PC-3 (cell line): ENCODE measurements at regions of chr6 and their contacts with region 1.

Region 1: DNA sequence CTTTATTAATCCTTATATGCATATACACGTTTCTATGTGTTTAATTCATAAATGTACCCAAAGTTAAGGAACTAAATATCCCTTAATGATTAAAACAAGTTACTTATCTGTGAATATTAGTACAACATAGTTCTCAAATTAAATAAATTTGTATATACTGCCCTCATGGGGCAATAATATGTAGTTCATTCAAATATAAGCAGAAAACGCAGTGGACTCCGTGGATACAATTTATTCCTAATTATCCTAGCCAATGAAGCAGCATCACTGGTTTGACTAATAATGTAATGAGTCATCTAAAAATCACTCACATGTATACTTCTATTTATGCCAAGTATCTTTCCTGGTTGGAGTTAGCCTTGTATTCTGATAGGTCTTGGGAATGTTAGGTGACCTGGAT is 111.6 kb downstream of the TBC1D32 start:
- DNase-seq: peak; percentile 70
- ATAC-seq: peak; percentile 73
- H3K4me3 ChIP-seq: no peak overlapping the region
- H3K27ac ChIP-seq: no peak overlapping the region
- H3K4me1 ChIP-seq: 0 out of 2 replicates have a peak, but pooled peaks cover 4% of the 10 kb centered on the region
- H3K27me3 ChIP-seq: no peaks in the 10 kb centered on the region
- CTCF ChIP-seq: peak; percentile 52

Region 2: DNA sequence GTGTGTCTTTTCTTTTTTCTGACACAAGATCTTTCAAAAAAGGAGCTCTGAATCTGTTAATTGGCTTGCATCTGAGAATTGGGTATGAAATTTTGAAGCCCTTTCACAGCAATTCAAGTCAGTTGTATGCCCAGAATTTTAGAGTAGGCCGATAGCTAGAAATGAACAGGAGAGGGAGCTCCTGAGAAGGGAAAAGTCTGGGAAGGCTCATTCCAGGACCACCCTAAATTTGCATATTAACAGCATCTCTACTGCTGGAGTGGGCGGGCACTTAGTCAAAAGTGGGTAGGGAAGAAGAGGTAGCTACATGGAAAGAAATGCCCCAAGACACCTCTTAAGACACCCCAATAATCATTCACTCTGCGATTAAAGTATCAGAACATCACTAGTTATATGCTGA is 816.7 kb before region 1 on chr6:
- CTCF ChIA-PET with region 1: no interaction called
- POLR2A ChIA-PET with region 1: no interaction called
- intact Hi-C with region 1: loop called (anchors 10 kb)
- DNase-seq: peak; percentile 33
- ATAC-seq: no peak; the same call in 1 of the 2 replicates
- H3K4me3 ChIP-seq: no peak overlapping the region
- H3K27ac ChIP-seq: no peak overlapping the region
- H3K4me1 ChIP-seq: no peaks in the 10 kb centered on the region
- H3K27me3 ChIP-seq: no peaks in the 10 kb centered on the region
- CTCF ChIP-seq: peak; percentile 61

Region 3: DNA sequence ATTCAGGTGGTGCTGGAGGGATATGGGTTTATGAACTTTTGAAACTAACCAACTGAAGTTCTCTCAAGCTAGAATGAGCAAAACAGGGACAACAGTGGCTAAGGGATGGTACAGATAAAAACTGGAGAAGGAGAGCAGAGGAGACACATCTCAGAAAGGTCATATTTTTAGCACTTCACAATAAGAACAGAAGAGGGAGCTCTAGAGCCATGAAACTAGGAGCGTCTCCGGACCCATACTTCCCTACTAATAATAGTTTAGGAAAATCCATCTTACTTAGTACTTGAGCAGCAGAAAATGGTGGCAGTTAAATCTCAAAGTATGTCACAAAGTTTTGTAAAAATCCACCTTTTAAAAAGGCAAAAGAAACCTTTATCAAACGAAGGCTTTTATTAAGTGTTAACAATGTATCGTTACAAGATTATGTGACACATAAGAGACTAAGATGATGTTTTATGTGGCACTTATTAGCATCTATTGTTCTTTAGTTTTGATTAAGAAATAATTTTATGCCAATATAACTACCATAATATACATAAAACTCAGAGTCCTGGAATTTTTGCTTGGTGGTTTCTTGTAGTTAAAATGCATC is 167.0 kb before region 1 on chr6:
- CTCF ChIA-PET with region 1: no interaction called
- POLR2A ChIA-PET with region 1: no interaction called
- intact Hi-C with region 1: loop called (anchors 1 kb)
- DNase-seq: peak; percentile 78
- ATAC-seq: peak; percentile 78
- H3K4me3 ChIP-seq: no peak overlapping the region
- H3K27ac ChIP-seq: no peak overlapping the region
- H3K4me1 ChIP-seq: no peaks in the 10 kb centered on the region
- H3K27me3 ChIP-seq: no peaks in the 10 kb centered on the region
- CTCF ChIP-seq: peak; percentile 74

Region 4: DNA sequence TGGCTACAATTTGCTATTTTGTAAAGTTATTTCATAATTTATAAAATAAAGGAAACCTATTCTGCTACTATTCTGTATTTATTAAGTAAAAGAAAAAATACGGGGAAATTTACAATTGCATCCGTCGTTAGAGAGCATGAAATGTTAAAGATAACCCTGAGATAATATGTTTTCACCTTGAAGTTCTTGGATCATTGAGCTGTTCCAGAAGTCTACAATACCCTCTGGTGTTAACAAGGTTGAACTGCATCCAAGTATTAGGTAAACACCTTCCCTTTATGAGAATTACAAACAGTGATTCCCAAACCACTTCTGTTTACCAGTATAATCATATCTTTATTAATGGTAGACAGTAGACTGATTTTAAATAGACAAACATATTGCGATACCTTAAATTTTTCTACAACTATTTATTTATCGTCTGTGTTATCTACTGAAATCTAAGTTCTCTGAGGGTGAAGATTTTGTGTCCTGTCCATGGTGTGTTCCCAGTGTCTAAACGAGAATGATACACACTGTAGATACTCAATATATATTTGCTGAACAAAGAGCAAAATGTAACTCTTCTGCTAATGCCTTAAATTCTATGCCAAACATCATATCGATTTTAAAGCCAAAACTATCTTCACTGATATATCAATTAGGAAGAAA is 83.4 kb after region 1 on chr6:
- CTCF ChIA-PET with region 1: no interaction called
- POLR2A ChIA-PET with region 1: no interaction called
- intact Hi-C with region 1: loop called (anchors 2 kb)
- DNase-seq: peak; percentile 50
- ATAC-seq: peak; percentile 61
- H3K4me3 ChIP-seq: no peak overlapping the region
- H3K27ac ChIP-seq: no peak overlapping the region
- H3K4me1 ChIP-seq: no peaks in the 10 kb centered on the region
- H3K27me3 ChIP-seq: no peaks in the 10 kb centered on the region
- CTCF ChIP-seq: peak; percentile 57